ENCODE measurements at regions of chr19 and their contacts with region 1.

Region 1: GRCh38 chr19:21020298-21021227 is at the start of gene ZNF430:
- DNase-seq: peak; percentile 75 to 95 (median 93)
- ATAC-seq: peak; percentile 98
- H3K4me3 ChIP-seq: peak within 1 kb of the TSS; percentile 95
- H3K4me3 Mint-ChIP-seq: peak within 1 kb of the TSS; percentile 99 to 100 (median 100)
- H3K27ac ChIP-seq: peak within 1 kb of the TSS; percentile 97
- H3K27ac Mint-ChIP-seq: peak within 1 kb of the TSS; percentile 99 to 100 (median 100)
- H3K4me1 ChIP-seq: peaks cover 14 to 20% of the 10 kb centered on the region in 2 donors
- H3K4me1 Mint-ChIP-seq: peaks cover 32 to 56% (median 52%) of the 10 kb centered on the region in 7 donors
- H3K27me3 ChIP-seq: no peaks in the 10 kb centered on the region
- H3K27me3 Mint-ChIP-seq: no peaks in the 10 kb centered on the region
- total RNA-seq, gene ZNF430: 26.4 to 52.0 (median 42.2) TPM

Region 2: GRCh38 chr19:19776041-19777008 is 1244.2 kb before region 1 on chr19:
- CTCF ChIA-PET with region 1: no interaction called
- POLR2A ChIA-PET with region 1: no interaction called
- intact Hi-C with region 1: loop called (anchors 1 to 2 kb)
- DNase-seq: peak; percentile 79 to 95 (median 91)
- ATAC-seq: peak; percentile 100
- H3K4me3 ChIP-seq: peak overlapping the region; percentile 91
- H3K4me3 Mint-ChIP-seq: peak overlapping the region; percentile 91 to 100 (median 98)
- H3K27ac ChIP-seq: peak overlapping the region; percentile 84
- H3K27ac Mint-ChIP-seq: peak overlapping the region; percentile 88 to 99 (median 97)
- H3K4me1 ChIP-seq: peaks cover 11 to 20% of the 10 kb centered on the region in 2 donors
- H3K4me1 Mint-ChIP-seq: peaks cover 25 to 67% (median 54%) of the 10 kb centered on the region in 7 donors
- H3K27me3 ChIP-seq: no peaks in the 10 kb centered on the region
- H3K27me3 Mint-ChIP-seq: no peaks in the 10 kb centered on the region

Region 3: GRCh38 chr19:20237761-20238623 is 782.6 kb before region 1 on chr19:
- CTCF ChIA-PET with region 1: no interaction called
- POLR2A ChIA-PET with region 1: no interaction called
- intact Hi-C with region 1: loop called in 1 of 2 experiments (anchors 5 kb)
- DNase-seq: peak; percentile 70 to 90 (median 83)
- ATAC-seq: peak; percentile 97
- H3K4me3 ChIP-seq: peak overlapping the region; percentile 71
- H3K4me3 Mint-ChIP-seq: peak overlapping the region; percentile 83 to 98 (median 96)
- H3K27ac ChIP-seq: peak overlapping the region; percentile 63
- H3K27ac Mint-ChIP-seq: peak overlapping the region; percentile 55 to 95 (median 87)
- H3K4me1 ChIP-seq: peaks cover 0 to 4% of the 10 kb centered on the region in 2 donors
- H3K4me1 Mint-ChIP-seq: peaks cover 5 to 12% (median 10%) of the 10 kb centered on the region in 7 donors
- H3K27me3 ChIP-seq: no peaks in the 10 kb centered on the region
- H3K27me3 Mint-ChIP-seq: no peaks in the 10 kb centered on the region

Region 4: DNA sequence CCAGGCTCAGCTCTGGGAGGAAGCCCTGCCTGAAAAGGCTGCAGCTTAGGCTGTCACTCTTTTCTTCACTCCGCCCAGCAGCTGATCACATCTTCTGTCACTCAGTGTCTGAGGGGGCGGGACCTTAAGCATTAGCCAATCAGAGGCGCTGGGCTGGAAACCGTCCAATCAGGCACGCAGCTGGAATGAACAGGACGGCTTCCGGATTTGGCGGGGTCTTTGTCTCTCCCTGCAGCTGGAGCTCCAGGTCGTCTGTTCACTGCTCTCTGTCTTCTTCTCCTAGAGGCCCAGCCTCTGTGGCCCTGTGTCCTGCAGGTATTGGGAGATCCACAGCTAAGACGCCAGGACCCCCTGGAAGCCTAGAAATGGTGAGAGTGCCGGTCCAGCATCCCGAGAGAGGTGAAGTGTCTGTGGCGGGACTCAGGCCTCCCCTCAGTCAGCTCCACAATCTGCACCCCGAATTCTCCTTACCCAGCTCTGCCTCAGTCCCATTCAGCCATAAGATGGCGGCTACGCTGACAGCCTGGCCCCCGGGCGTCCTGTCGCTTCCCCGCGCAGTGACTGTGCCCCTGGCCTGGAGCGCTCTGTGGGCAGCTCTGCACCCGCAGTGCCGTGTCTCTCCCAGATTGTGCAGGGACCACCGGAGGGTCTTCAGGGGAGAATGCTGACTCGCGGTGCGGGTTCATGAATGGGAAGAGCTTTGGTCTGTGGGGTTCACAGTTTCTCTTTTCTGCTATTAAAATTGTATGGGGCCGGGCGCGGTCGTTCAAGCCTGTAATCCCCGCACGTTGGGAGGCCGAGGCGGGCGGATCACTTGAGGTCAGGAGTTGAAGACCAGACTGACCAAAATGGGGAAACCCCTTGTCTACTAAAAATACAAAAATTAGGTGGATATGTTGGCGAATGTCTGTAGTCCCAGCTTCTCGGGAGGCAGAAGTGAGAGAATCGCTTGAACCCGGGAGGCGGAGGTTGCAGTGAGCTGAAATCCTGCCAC is 244.2 kb before region 1 on chr19 and contains the start of gene ZNF66:
- CTCF ChIA-PET with region 1: no interaction called
- POLR2A ChIA-PET with region 1: interaction called, 3 read pairs
- intact Hi-C with region 1: loop called (anchors 1 kb)
- DNase-seq: peak; percentile 84 to 96 (median 95)
- ATAC-seq: peak; percentile 99
- H3K4me3 ChIP-seq: peak within 1 kb of the TSS; percentile 99
- H3K4me3 Mint-ChIP-seq: peak within 1 kb of the TSS; percentile 92 to 100 (median 99)
- H3K27ac ChIP-seq: peak within 1 kb of the TSS; percentile 81
- H3K27ac Mint-ChIP-seq: peak within 1 kb of the TSS; percentile 86 to 97 (median 93)
- H3K4me1 ChIP-seq: peaks cover 0 to 5% of the 10 kb centered on the region in 2 donors
- H3K4me1 Mint-ChIP-seq: peaks cover 3 to 44% (median 31%) of the 10 kb centered on the region in 7 donors
- H3K27me3 ChIP-seq: no peaks in the 10 kb centered on the region
- H3K27me3 Mint-ChIP-seq: no peaks in the 10 kb centered on the region
- total RNA-seq, gene ZNF66: 7.6 to 18.5 (median 12.2) TPM

Region 5: GRCh38 chr19:20964798-20965197 is 55.8 kb before region 1 on chr19:
- CTCF ChIA-PET with region 1: no interaction called
- POLR2A ChIA-PET with region 1: no interaction called
- intact Hi-C with region 1: no loop called
- DNase-seq: peak in 1 of 9 donors; percentile 0
- ATAC-seq: no peak
- H3K4me3 ChIP-seq: no peak overlapping the region
- H3K4me3 Mint-ChIP-seq: no peak overlapping the region
- H3K27ac ChIP-seq: no peak overlapping the region
- H3K27ac Mint-ChIP-seq: no peak overlapping the region
- H3K4me1 ChIP-seq: no peaks in the 10 kb centered on the region
- H3K4me1 Mint-ChIP-seq: no peaks in the 10 kb centered on the region
- H3K27me3 ChIP-seq: no peaks in the 10 kb centered on the region
- H3K27me3 Mint-ChIP-seq: peaks cover 0 to 10% (median 5%) of the 10 kb centered on the region in 5 donors

Region 6: GRCh38 chr19:21141787-21142464 is 121.4 kb after region 1 on chr19 and contains the start of gene ZNF431:
- CTCF ChIA-PET with region 1: no interaction called
- POLR2A ChIA-PET with region 1: interaction called, 14 read pairs
- intact Hi-C with region 1: loop called (anchors 1 kb)
- DNase-seq: peak; percentile 63 to 95 (median 91)
- ATAC-seq: peak; percentile 100
- H3K4me3 ChIP-seq: peak within 1 kb of the TSS; percentile 94
- H3K4me3 Mint-ChIP-seq: peak within 1 kb of the TSS; percentile 95 to 98 (median 97)
- H3K27ac ChIP-seq: peak within 1 kb of the TSS; percentile 91
- H3K27ac Mint-ChIP-seq: peak within 1 kb of the TSS; percentile 93 to 99 (median 96)
- H3K4me1 ChIP-seq: peaks cover 3 to 6% of the 10 kb centered on the region in 2 donors
- H3K4me1 Mint-ChIP-seq: peaks cover 20 to 69% (median 54%) of the 10 kb centered on the region in 7 donors
- H3K27me3 ChIP-seq: no peaks in the 10 kb centered on the region
- H3K27me3 Mint-ChIP-seq: no peaks in the 10 kb centered on the region
- total RNA-seq, gene ZNF431: 19.1 to 36.8 (median 25.4) TPM

Region 7: DNA sequence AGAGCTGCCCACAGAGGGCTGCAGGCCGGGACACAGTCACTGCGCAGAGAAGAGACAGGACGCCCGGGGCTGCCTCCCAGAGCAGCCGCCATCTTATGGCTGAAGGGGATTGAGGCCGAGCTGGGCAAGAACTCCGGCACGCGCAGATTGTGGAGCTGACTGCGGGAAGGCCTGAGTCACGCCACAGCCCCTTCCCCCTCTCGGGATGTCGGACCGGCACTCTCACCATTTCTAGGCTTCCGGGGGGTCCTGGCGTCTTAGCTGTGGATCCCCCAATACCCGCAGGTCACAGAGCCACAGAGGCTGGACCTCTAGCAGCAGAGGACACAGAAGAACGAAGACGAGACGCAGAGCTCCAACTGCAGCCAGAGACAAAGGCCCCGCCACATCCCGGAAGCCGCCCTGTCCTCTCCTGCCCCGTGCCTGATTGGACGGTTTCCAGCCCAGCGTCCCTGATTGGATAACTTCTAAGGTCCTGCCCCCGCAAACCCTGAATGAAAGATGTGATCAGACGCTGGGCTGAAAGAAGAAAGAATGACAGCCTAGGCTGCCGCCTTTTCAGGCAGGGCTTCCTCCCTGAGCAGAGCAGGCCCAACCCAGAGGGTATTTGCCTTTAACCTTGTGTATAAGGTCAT is 815.4 kb after region 1 on chr19 and contains the start of gene ZNF43:
- CTCF ChIA-PET with region 1: no interaction called
- POLR2A ChIA-PET with region 1: no interaction called
- intact Hi-C with region 1: loop called (anchors 1 to 10 kb)
- DNase-seq: peak; percentile 76 to 96 (median 93)
- ATAC-seq: peak; percentile 99
- H3K4me3 ChIP-seq: peak within 1 kb of the TSS; percentile 97
- H3K4me3 Mint-ChIP-seq: peak within 1 kb of the TSS; percentile 93 to 99 (median 98)
- H3K27ac ChIP-seq: peak within 1 kb of the TSS; percentile 88
- H3K27ac Mint-ChIP-seq: peak within 1 kb of the TSS; percentile 96 to 99 (median 98)
- H3K4me1 ChIP-seq: peaks cover 5 to 9% of the 10 kb centered on the region in 2 donors
- H3K4me1 Mint-ChIP-seq: peaks cover 3 to 48% (median 35%) of the 10 kb centered on the region in 7 donors
- H3K27me3 ChIP-seq: no peaks in the 10 kb centered on the region
- H3K27me3 Mint-ChIP-seq: no peaks in the 10 kb centered on the region
- total RNA-seq, gene ZNF43: 20.5 to 39.3 (median 36.2) TPM

Measured in naive thymus-derived CD4-positive, alpha-beta T cell (primary cell).